Endothelial cell of umbilical vein (primary cell): ENCODE measurements at regions of chr2 and their contacts with region 1.

Region 1: GRCh38 chr2:160429248-160430000 is 64.2 kb downstream of the RBMS1 start:
- DNase-seq: peak; percentile 77
- H3K4me3 ChIP-seq: no peak overlapping the region
- H3K27ac ChIP-seq: peak overlapping the region; percentile 89
- H3K4me1 ChIP-seq: peaks cover 49% of the 10 kb centered on the region
- H3K27me3 ChIP-seq: no peaks in the 10 kb centered on the region
- CTCF ChIP-seq: peak; percentile 19 to 22
- POLR2A ChIP-seq: no peak

Region 2: DNA sequence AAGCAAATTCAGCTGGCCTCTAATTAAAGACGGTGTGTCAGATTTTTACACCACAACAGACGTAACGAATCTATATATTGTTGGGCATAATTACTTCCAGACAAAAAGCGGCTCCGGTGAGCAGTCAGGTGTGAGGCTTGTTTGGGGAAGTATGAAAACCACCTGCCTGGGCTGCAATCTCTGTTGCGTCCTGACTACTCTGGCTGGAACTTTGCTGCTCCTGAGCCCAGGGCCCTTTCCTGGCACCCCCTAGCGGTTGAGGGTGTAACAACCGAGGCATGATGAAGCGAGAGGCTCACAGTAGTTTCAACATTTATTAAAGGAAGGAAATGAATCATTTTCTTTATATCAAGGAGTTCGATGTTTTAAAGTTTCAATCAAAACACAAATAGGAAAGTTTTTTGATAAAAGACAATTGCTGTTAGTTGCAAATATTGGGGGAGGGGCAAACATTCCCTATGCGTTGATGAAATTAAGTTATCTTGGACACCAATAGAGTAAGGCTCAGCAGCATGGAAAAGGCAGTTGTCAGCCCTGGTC is 218.8 kb before region 1 on chr2:
- CTCF ChIA-PET with region 1: no interaction called
- POLR2A ChIA-PET with region 1: no interaction called
- dilution Hi-C with region 1: no loop called
- intact Hi-C with region 1: loop called (anchors 5 kb)
- DNase-seq: peak; percentile 92
- H3K4me3 ChIP-seq: no peak overlapping the region
- H3K27ac ChIP-seq: peak overlapping the region; percentile 91
- H3K4me1 ChIP-seq: peaks cover 60% of the 10 kb centered on the region
- H3K27me3 ChIP-seq: no peaks in the 10 kb centered on the region
- CTCF ChIP-seq: peak; percentile 84 to 98
- POLR2A ChIP-seq: no peak

Region 3: DNA sequence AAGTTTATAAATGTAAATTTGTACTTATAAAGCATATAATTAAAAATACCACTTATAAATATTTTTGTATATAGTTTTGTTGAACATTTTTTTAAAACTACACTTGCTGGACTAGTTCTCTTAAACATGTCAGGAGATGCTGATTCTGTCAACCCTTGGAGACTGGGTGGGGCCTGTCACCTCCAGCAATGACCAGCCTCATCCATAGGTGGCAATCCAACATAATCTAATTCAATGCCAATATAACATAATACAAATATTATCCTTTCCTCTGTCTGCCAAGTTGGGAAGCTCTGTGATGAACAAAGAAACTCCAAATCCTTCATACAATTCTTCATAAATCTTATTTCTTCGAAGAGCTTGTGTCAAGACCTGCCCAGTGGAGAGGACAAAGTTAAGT is 76.3 kb before region 1 on chr2:
- CTCF ChIA-PET with region 1: interaction called, 19 read pairs
- POLR2A ChIA-PET with region 1: no interaction called
- dilution Hi-C with region 1: no loop called
- intact Hi-C with region 1: no loop called
- DNase-seq: peak; percentile 38
- H3K4me3 ChIP-seq: no peak overlapping the region
- H3K27ac ChIP-seq: no peak overlapping the region
- H3K4me1 ChIP-seq: peaks cover 3% of the 10 kb centered on the region
- H3K27me3 ChIP-seq: no peaks in the 10 kb centered on the region
- CTCF ChIP-seq: peak; percentile 28 to 31
- POLR2A ChIP-seq: no peak

Region 4: GRCh38 chr2:160417745-160418397 is 11.6 kb before region 1 on chr2:
- CTCF ChIA-PET with region 1: interaction called, 31 read pairs
- POLR2A ChIA-PET with region 1: interaction called, 3 read pairs
- dilution Hi-C with region 1: no loop called
- intact Hi-C with region 1: loop called (anchors 1 kb)
- DNase-seq: peak; percentile 84
- H3K4me3 ChIP-seq: peak overlapping the region in 1 of 3 experiments; percentile 55
- H3K27ac ChIP-seq: peak overlapping the region; percentile 97
- H3K4me1 ChIP-seq: peaks cover 51% of the 10 kb centered on the region
- H3K27me3 ChIP-seq: no peaks in the 10 kb centered on the region
- CTCF ChIP-seq: no peak
- POLR2A ChIP-seq: peak; percentile 53

Region 5: DNA sequence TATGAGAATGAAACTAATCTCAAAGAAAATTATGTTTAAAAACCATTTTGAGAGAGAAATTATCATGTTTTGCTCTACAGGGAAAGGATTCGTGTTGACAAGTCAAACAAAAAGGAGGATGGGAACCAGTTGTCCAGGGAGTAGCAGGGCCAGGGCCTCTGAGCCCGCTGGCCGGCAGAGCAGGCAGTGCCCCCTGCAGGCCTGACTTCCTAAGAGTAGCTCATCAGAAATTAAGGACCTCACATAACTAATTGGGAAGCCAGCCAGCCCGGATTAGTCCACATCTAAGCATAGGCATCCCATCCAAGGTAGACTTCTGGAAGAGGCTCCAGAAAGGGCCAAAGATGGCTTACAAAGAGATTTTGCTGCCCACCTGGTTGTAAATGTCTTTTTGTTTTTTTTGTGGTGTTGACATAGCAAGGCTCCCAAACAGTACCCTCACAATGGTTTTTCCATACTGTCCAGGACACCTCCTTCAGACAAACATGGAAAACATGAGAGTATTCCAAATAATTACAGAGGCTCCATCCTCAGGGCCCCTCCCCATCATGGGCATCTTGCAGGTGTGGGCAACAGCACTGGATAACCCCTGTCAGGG is 489.6 kb after region 1 on chr2:
- CTCF ChIA-PET with region 1: interaction called, 31 read pairs
- POLR2A ChIA-PET with region 1: no interaction called
- dilution Hi-C with region 1: no loop called
- intact Hi-C with region 1: loop called (anchors 2 kb)
- DNase-seq: peak; percentile 68
- H3K4me3 ChIP-seq: no peak overlapping the region
- H3K27ac ChIP-seq: no peak overlapping the region
- H3K4me1 ChIP-seq: peaks cover 11% of the 10 kb centered on the region
- H3K27me3 ChIP-seq: no peaks in the 10 kb centered on the region
- CTCF ChIP-seq: peak; percentile 68 to 73
- POLR2A ChIP-seq: no peak